HCT116 (cell line): ENCODE measurements at regions of chr15 and their contacts with region 1.

Region 1: DNA sequence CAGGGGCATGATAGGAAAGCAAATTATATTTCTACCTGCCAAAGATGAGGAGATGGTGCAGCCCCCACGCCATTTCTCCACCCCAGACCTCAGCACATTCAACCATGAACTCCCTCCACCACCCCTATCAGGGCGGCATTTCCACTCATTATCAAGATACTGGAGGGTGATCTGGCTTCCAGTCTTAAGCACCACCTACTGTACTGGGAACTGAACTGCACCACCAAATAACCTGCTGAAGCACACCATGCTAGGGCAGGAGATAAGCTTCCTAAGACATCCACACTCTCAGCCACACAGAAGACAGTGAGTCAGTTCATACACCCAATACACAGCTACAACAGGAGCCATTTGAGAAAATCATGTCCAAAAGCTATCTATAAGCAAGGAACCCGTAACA is 98.8 kb downstream of the FGF7 start:
- DNase-seq: peak; percentile 6
- ATAC-seq: peak; percentile 54; the same call in 1 of the 2 replicates
- H3K4me3 ChIP-seq: no peak overlapping the region
- H3K27ac ChIP-seq: no peak overlapping the region
- H3K4me1 ChIP-seq: no peaks in the 10 kb centered on the region
- H3K27me3 ChIP-seq: no peaks in the 10 kb centered on the region
- CTCF ChIP-seq: 0 out of 6 replicates have a peak, but pooled peaks of 1 of the 3 experiments have one; percentile 14
- POLR2A ChIP-seq: no peak
- RAD21 ChIP-seq: no peak

Region 2: DNA sequence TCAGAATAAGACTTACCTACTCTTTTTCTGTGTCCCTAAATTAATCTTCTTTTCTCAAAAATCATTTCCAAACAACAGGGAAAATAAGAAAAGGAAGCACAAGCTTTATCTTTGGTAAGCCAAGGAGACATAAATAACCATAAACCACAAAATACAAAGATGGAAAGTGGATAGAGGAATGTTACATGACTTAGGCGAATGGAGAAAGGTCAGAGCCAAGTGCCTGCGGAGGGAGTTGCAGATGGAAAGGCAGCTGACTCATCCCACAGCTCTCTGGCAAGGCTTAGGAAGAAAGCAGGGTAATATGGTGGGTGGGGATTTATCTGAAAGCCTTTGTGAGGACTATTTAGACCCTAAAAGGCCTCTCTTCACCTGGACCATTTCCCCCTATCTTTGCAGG is 279.0 kb before region 1 on chr15:
- CTCF ChIA-PET with region 1: no interaction called
- POLR2A ChIA-PET with region 1: no interaction called
- RAD21 ChIA-PET with region 1: no interaction called
- intact Hi-C with region 1: no loop called
- DNase-seq: no peak
- ATAC-seq: no peak
- H3K4me3 ChIP-seq: no peak overlapping the region
- H3K27ac ChIP-seq: no peak overlapping the region
- H3K4me1 ChIP-seq: no peaks in the 10 kb centered on the region
- H3K27me3 ChIP-seq: no peaks in the 10 kb centered on the region
- CTCF ChIP-seq: no peak
- POLR2A ChIP-seq: no peak
- RAD21 ChIP-seq: no peak

Region 3: GRCh38 chr15:49558924-49559323 is 37.1 kb after region 1 on chr15:
- CTCF ChIA-PET with region 1: no interaction called
- POLR2A ChIA-PET with region 1: no interaction called
- RAD21 ChIA-PET with region 1: no interaction called
- intact Hi-C with region 1: no loop called
- DNase-seq: no peak
- ATAC-seq: no peak
- H3K4me3 ChIP-seq: no peak overlapping the region
- H3K27ac ChIP-seq: no peak overlapping the region
- H3K4me1 ChIP-seq: no peaks in the 10 kb centered on the region
- H3K27me3 ChIP-seq: no peaks in the 10 kb centered on the region
- CTCF ChIP-seq: no peak
- POLR2A ChIP-seq: no peak
- RAD21 ChIP-seq: no peak

Region 4: DNA sequence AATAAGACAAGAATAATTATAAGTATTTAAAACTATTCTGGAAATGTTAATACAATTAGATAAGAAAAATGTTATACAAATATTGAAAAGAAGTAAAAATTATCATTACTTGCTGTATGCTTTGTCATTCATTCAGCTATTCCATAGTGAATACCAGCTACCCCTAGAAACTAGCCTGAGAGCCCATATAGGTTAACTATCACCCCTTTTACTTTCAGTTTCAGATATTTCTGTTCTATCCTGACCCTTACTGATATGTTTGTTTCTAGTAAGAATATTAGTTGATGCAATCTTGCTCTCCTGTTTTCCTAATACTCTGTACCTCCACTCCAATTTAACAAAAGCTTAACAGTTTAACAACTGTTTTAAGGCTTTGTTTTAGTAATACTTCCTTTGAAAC is 67.2 kb after region 1 on chr15:
- CTCF ChIA-PET with region 1: no interaction called
- POLR2A ChIA-PET with region 1: no interaction called
- RAD21 ChIA-PET with region 1: no interaction called
- intact Hi-C with region 1: loop called (anchors 10 kb)
- DNase-seq: no peak
- ATAC-seq: no peak
- H3K4me3 ChIP-seq: no peak overlapping the region
- H3K27ac ChIP-seq: no peak overlapping the region
- H3K4me1 ChIP-seq: no peaks in the 10 kb centered on the region
- H3K27me3 ChIP-seq: no peaks in the 10 kb centered on the region
- CTCF ChIP-seq: no peak
- POLR2A ChIP-seq: no peak
- RAD21 ChIP-seq: no peak